Heart left ventricle (tissue), 16 donors: ENCODE measurements at regions of chr6 and their contacts with region 1.

Region 1: GRCh38 chr6:149259753-149260152 is 57.8 kb upstream of the TAB2 start:
- DNase-seq: peak in 4 of 5 donors; percentile 28 to 58 (median 33)
- ATAC-seq: peak in 3 of 4 donors; percentile 77 to 83 (median 82)
- H3K4me3 ChIP-seq: no peak overlapping the region
- H3K27ac ChIP-seq: peak overlapping the region in 1 of 12 donors; percentile 84
- H3K4me1 ChIP-seq: peaks cover 0 to 37% (median 2%) of the 10 kb centered on the region in 12 donors
- H3K27me3 ChIP-seq: no peaks in the 10 kb centered on the region
- CTCF ChIP-seq: no peak
- POLR2A ChIP-seq: no peak

Region 2: GRCh38 chr6:148926478-148926877 is 333.3 kb before region 1 on chr6:
- intact Hi-C with region 1: no loop called
- DNase-seq: no peak
- ATAC-seq: peak in 3 of 4 donors; percentile 63 to 88 (median 87)
- H3K4me3 ChIP-seq: no peak overlapping the region
- H3K27ac ChIP-seq: no peak overlapping the region
- H3K4me1 ChIP-seq: no peaks in the 10 kb centered on the region
- H3K27me3 ChIP-seq: no peaks in the 10 kb centered on the region
- CTCF ChIP-seq: no peak
- POLR2A ChIP-seq: no peak

Region 3: GRCh38 chr6:149089510-149089909 is 170.2 kb before region 1 on chr6:
- intact Hi-C with region 1: loop called in 1 of 10 experiments (anchors 2 kb)
- DNase-seq: no peak
- ATAC-seq: no peak
- H3K4me3 ChIP-seq: no peak overlapping the region
- H3K27ac ChIP-seq: no peak overlapping the region
- H3K4me1 ChIP-seq: peaks cover 0 to 11% (median 0%) of the 10 kb centered on the region in 12 donors
- H3K27me3 ChIP-seq: peaks cover 0 to 16% (median 0%) of the 10 kb centered on the region in 9 donors
- CTCF ChIP-seq: no peak
- POLR2A ChIP-seq: no peak